AG04449 (cell line): ENCODE measurements at regions of chr15 and their contacts with region 1.

Region 1: GRCh38 chr15:65054333-65055200 is 9.4 kb downstream of the SLC51B start:
- DNase-seq: no peak
- H3K4me3 ChIP-seq: no peak overlapping the region
- CTCF ChIP-seq: peak; percentile 97

Region 2: GRCh38 chr15:64749999-64750657 is 304.4 kb before region 1 on chr15:
- CTCF ChIA-PET with region 1: no interaction called
- POLR2A ChIA-PET with region 1: no interaction called
- DNase-seq: no peak
- H3K4me3 ChIP-seq: no peak overlapping the region
- CTCF ChIP-seq: no peak

Region 3: GRCh38 chr15:65038838-65039237 is 15.7 kb before region 1 on chr15:
- CTCF ChIA-PET with region 1: interaction called, 53 read pairs
- POLR2A ChIA-PET with region 1: no interaction called
- DNase-seq: no peak
- H3K4me3 ChIP-seq: no peak overlapping the region
- CTCF ChIP-seq: no peak

Region 4: GRCh38 chr15:65077981-65078352 is 23.4 kb after region 1 on chr15:
- CTCF ChIA-PET with region 1: interaction called, 338 read pairs
- POLR2A ChIA-PET with region 1: no interaction called
- DNase-seq: no peak
- H3K4me3 ChIP-seq: no peak overlapping the region
- CTCF ChIP-seq: peak; percentile 85

Region 5: DNA sequence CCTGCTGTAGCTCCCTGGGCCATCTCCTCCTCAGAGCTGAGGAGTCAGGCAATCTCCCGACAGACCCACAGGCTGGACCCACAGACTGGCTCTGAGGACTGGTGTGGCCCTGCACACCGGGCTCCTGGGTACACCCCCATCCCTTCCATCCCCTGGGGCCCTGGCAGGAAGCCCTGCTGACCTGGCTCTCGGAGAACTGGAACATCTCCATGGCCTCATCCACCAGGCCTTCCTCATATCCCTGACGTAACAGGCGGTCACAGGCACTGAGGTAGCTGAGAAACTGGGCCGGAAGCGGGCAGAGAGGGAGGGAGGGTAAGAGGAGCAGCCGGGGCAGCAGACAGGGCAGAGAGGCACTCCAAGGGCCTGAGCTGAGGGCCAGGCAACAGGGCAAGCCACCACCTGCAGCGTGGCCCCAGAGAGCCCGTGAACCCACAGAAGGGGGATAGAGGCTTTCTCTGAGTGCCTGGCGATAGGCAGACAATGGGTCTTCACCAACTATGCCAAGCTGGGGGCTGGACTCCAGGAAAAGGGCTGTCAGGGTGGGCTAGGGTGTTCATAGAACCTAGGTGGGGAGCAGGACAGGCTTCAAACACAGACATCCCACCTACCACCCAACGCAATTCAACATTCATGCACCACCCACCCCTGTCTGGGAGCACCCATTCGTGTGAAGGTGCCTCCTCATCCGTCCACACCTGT is 39.9 kb after region 1 on chr15:
- CTCF ChIA-PET with region 1: interaction called, 17 read pairs
- POLR2A ChIA-PET with region 1: no interaction called
- DNase-seq: no peak
- H3K4me3 ChIP-seq: no peak overlapping the region
- CTCF ChIP-seq: no peak

Region 6: DNA sequence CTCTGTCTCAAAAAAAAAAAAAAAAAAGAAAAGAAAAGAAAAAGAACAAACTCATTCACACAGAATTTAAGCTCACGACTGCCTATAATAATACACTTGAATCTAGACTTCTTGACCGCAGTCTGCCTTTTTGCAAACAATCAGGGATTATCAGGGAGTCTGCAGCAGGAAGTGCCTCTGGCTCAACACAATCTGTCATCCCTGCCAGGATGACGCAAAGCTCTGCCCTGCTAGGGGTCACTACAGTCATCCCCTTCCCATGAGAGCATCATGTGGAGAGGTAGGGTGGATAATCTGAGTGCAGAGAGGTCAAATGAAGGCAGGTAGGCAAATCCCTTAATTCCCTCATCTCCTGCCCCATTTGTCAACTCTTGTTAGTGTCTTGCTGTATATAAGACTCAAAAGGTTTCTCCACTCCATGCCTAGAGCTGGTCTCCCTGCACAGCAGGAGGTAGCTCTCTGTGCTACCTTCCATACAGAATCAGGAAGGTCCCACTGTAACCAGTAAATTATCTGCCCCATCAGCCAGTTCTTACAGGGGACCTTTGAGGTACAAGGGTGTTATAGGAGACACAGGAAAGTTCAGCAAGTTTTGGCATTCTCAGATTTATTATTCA is 56.2 kb after region 1 on chr15:
- CTCF ChIA-PET with region 1: interaction called, 133 read pairs
- POLR2A ChIA-PET with region 1: no interaction called
- DNase-seq: no peak
- H3K4me3 ChIP-seq: no peak overlapping the region
- CTCF ChIP-seq: no peak